ENCODE measurements at regions of chr1 and their contacts with region 1.

Region 1: GRCh38 chr1:45230540-45230939 is 24.1 kb upstream of the ZSWIM5 start:
- DNase-seq: peak; percentile 14
- ATAC-seq: no peak
- H3K4me3 Mint-ChIP-seq: no peak overlapping the region
- H3K27ac Mint-ChIP-seq: no peak overlapping the region
- H3K4me1 Mint-ChIP-seq: no peaks in the 10 kb centered on the region
- H3K27me3 Mint-ChIP-seq: no peaks in the 10 kb centered on the region

Region 2: GRCh38 chr1:44907893-44908292 is 322.6 kb before region 1 on chr1:
- CTCF ChIA-PET with region 1: no interaction called
- POLR2A ChIA-PET with region 1: no interaction called
- intact Hi-C with region 1: no loop called
- DNase-seq: no peak
- ATAC-seq: no peak
- H3K4me3 Mint-ChIP-seq: no peak overlapping the region
- H3K27ac Mint-ChIP-seq: no peak overlapping the region
- H3K4me1 Mint-ChIP-seq: no peaks in the 10 kb centered on the region
- H3K27me3 Mint-ChIP-seq: no peaks in the 10 kb centered on the region

Region 3: GRCh38 chr1:45018599-45019230 is 211.8 kb before region 1 on chr1:
- CTCF ChIA-PET with region 1: no interaction called
- POLR2A ChIA-PET with region 1: no interaction called
- intact Hi-C with region 1: loop called in 1 of 2 experiments (anchors 1 kb)
- DNase-seq: peak; percentile 81
- ATAC-seq: peak; percentile 95
- H3K4me3 Mint-ChIP-seq: no peak overlapping the region
- H3K27ac Mint-ChIP-seq: no peak overlapping the region
- H3K4me1 Mint-ChIP-seq: peaks cover 13% of the 10 kb centered on the region
- H3K27me3 Mint-ChIP-seq: no peaks in the 10 kb centered on the region

Measured in activated CD4-positive, alpha-beta T cell treated with anti-CD3 and anti-CD28 coated beads for 36 hours (primary cell).